H1 (cell line): ENCODE measurements at regions of chr7 and their contacts with region 1.

Region 1: DNA sequence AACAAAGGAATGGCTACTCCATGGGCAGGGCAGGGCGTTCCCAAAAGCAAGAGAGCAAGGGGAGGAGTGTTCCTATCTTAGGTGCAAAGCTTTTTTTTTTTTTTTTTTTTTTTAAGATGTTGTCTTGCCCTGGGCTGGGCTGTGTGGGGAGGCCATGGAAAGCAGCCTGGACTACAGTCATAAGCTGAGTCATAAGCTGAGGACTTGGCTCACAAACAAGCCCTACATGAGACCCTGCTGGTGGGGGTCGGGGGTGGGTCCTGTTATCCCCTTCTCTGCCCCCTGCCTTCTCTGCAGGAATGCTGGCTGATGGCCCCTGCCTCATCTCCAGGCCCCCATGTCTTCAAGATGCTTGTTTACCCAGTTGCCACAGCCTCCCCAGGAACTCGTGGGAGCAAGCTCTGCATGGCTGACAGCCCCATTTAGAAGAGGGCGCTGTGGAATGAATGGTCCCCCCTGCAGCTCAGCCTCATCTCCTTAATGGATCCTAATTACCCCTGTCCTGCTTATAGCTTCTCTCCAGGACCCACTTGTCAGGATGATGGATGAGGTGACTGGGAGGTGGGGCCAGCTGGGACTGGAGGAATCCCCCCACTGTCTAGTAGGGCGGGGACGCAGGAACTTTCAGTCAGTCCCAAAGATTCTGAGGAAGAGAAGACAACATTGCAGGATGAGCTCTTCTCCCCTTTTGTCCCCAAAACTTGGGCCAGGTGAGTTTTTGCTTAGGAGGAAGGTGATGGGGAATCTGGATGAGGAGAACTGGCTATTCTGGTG is 340.8 kb upstream of the PODXL start:
- DNase-seq: peak in 1 of 2 experiments; percentile 17
- H3K4me3 ChIP-seq: peak overlapping the region in 1 of 4 experiments; percentile 20; a peak in 1 of 8 replicates
- H3K27ac ChIP-seq: no peak overlapping the region
- H3K4me1 ChIP-seq: peaks cover 5 to 16% (median 11%) of the 10 kb centered on the region in 4 experiments
- H3K27me3 ChIP-seq: peaks cover 0 to 7% (median 4%) of the 10 kb centered on the region in 4 experiments; a peak in 3 of 7 replicates
- CTCF ChIP-seq: no peak
- EP300 ChIP-seq: no peak
- POLR2A ChIP-seq: no peak
- RAD21 ChIP-seq: no peak

Region 2: DNA sequence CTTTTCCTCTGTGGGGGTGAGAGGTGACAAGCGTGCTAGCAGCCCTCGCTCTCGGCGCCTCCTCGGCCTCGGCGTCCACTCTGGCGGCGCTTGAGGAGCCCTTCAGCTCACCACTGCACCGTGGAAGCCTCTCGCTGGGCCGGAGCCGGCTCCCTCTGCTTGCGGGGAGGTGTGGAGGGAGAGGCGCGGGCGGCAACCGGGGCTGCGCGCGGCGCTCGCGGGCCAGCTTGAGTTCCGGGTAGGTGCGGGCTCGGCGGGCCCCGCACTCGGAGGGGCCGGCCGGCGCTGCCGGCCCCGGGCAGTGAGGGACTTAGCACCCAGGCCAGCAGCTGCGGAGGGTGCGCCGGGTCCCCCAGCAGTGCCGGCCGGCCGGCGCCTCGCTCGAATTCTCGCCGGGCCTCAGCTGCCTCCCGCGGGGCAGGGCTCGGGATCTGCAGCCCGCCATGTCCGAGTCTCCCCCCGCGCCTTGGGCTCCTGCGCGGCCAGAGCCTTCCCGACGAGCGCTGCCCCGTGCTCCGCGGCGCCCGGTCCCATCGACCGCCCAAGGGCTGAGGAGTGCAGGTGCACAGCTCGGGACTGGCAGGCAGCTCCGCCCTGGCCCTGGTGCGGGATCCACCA is 12.1 kb after region 1 on chr7:
- CTCF ChIA-PET with region 1: interaction called, 20 read pairs
- POLR2A ChIA-PET with region 1: interaction called, 5 read pairs
- DNase-seq: peak in 1 of 2 experiments; percentile 42
- H3K4me3 ChIP-seq: peak overlapping the region; percentile 26 to 57 (median 34)
- H3K27ac ChIP-seq: no peak overlapping the region
- H3K4me1 ChIP-seq: no peaks in the 10 kb centered on the region
- H3K27me3 ChIP-seq: peaks cover 10 to 32% (median 27%) of the 10 kb centered on the region in 4 experiments
- CTCF ChIP-seq: no peak
- EP300 ChIP-seq: no peak
- POLR2A ChIP-seq: no peak
- RAD21 ChIP-seq: no peak

Region 3: DNA sequence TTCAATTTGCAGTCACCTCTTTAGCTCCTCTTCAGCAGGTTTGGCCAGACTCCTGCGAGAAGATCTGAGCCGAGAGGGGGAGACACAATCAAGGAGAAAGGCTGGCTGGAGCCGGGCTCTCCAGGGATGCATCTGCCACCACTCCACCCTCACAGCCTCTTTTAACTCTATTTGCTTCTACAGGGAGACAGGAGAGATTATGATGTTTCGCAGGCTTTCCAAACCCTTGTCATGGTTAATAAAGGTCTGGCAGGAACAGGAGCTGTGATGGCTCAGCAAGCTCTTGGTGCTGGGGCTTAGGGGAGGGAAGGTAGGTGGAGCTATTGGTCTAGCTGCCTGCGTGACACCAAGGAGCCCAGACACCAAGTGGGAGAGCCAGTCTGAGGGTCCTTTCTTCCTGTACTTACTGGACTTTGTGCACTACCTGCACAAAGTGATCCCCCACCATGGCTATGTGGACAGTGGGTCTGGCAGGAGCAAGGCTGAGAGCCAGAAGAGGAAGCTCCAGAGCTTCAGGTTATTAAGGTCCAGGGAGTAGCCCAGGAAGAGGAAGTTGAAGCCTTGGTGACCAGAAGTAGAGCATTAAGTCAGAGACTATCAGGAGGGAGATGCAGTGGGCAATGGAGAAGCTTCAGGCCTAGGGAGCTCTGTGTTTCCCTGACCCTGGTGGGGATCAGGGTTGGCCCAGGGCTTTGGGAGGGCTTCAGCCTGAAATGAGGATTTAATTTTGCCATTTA is 107.5 kb after region 1 on chr7:
- CTCF ChIA-PET with region 1: no interaction called
- POLR2A ChIA-PET with region 1: no interaction called
- DNase-seq: no peak
- H3K4me3 ChIP-seq: no peak overlapping the region
- H3K27ac ChIP-seq: no peak overlapping the region
- H3K4me1 ChIP-seq: no peaks in the 10 kb centered on the region
- H3K27me3 ChIP-seq: no peaks in the 10 kb centered on the region
- CTCF ChIP-seq: peak in 2 of 3 experiments; percentile 4 to 5; a peak in 2 of 4 replicates
- EP300 ChIP-seq: no peak
- POLR2A ChIP-seq: no peak
- RAD21 ChIP-seq: peak; percentile 16 to 37